A549 (cell line): ENCODE measurements at regions of chrX and their contacts with region 1.

Region 1: DNA sequence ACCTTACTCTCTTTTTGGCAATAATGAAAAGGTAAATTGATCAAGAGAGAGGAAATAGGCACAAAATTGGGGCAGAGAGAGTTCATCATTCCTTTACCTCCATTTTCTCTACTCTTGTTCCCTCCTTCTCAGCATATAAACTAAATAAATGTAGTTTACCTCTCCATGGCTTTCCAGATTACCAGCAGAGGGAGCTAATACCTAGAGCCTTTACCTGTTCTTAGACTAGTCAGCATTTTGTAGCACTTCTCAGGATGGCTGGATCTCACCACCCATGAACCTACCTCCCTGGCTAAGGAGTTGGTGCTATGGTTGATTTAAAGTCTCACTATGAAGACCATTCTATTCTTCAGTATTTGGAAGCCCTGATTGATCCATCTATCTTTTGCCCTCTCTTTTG is 15.7 kb downstream of the OFD1 start:
- DNase-seq: peak; percentile 46 to 69
- ATAC-seq: peak; percentile 70 to 84; a peak in 5 of 6 replicates
- H3K4me3 ChIP-seq: no peak overlapping the region
- H3K27ac ChIP-seq: no peak overlapping the region
- H3K4me1 ChIP-seq: no peaks in the 10 kb centered on the region
- CTCF ChIP-seq: peak; percentile 60
- EP300 ChIP-seq: no peak
- POLR2A ChIP-seq: no peak
- RAD21 ChIP-seq: peak; percentile 47 to 56

Region 2: DNA sequence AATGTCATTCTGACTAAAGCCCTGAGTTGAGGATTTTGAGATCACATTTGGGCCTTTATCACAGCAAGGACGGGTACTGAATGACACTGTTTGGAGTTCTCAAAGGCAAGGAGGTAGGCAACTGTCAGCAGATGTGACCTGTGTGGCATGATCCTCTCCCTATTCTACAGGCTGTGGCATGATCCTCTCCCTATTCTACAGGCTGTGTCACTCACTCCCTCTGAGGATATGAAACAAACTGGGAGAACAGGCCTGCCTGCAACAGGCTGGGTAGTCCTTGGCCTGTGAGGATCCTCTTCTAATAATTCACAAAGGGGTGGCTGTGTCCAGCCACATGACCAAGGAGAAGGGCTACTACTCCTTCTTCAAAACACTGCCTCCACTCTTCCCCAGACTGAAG is 112.2 kb before region 1 on chrX:
- CTCF ChIA-PET with region 1: no interaction called
- POLR2A ChIA-PET with region 1: no interaction called
- DNase-seq: no peak
- ATAC-seq: no peak
- H3K4me3 ChIP-seq: no peak overlapping the region
- H3K27ac ChIP-seq: no peak overlapping the region
- H3K4me1 ChIP-seq: peaks cover 7% of the 10 kb centered on the region; the same call in 1 of the 3 replicates
- CTCF ChIP-seq: no peak
- EP300 ChIP-seq: no peak
- POLR2A ChIP-seq: no peak
- RAD21 ChIP-seq: no peak

Region 3: GRCh38 chrX:13658602-13659001 is 91.6 kb before region 1 on chrX:
- CTCF ChIA-PET with region 1: interaction called, 10 read pairs
- POLR2A ChIA-PET with region 1: no interaction called
- DNase-seq: peak; percentile 25 to 58
- ATAC-seq: peak; percentile 78 to 80; a peak in 4 of 6 replicates
- H3K4me3 ChIP-seq: no peak overlapping the region
- H3K27ac ChIP-seq: peak overlapping the region; percentile 62 to 68; a peak in 5 of 6 replicates
- H3K4me1 ChIP-seq: peaks cover 13% of the 10 kb centered on the region; the same call in 2 of the 3 replicates
- CTCF ChIP-seq: peak; percentile 83
- EP300 ChIP-seq: no peak
- POLR2A ChIP-seq: no peak
- RAD21 ChIP-seq: peak; percentile 78 to 81

Region 4: DNA sequence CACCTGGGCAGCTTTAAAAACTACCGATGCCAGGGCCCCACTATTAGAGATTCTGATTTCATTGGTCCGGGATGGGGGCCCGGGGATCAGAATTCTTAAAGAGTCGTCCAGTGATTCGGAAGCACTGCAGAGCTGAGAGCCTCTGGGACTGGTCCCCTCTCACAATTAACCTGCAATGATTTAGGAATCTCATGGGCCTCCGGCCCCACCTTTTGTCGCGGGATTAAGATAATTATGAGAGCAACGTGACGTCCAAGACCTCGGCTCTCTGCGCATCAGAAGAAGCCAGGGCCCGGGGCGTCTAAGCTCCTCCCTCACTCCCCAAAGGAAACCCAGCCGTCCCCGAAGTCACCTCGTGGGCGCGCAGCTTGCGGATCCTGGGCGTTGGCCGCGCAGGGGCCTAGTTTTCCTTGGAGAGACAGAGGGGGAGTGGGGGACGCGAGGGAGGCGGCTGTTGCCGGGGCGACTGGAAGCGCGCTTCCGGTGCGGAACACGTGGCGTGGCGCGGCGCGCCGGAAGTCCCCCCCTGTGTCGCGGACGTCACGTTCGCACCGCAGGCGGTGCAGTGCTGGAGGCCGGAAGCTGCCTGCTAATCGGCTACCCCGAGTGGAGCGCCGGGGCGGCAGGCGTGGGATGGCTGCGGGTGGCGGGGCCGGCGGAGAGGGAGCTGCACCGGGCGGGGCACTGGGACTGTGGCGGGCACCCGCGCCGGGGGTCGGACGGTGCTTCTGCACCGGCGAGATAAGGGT is 279.4 kb after region 1 on chrX and contains the start of gene GEMIN8:
- CTCF ChIA-PET with region 1: interaction called, 28 read pairs
- POLR2A ChIA-PET with region 1: no interaction called
- DNase-seq: peak; percentile 59 to 95
- ATAC-seq: peak; percentile 95 to 96
- H3K4me3 ChIP-seq: peak within 1 kb of the TSS; percentile 87
- H3K27ac ChIP-seq: peak within 1 kb of the TSS; percentile 94 to 97
- H3K4me1 ChIP-seq: peaks cover 25% of the 10 kb centered on the region
- CTCF ChIP-seq: no peak
- EP300 ChIP-seq: no peak
- POLR2A ChIP-seq: peak; percentile 75
- RAD21 ChIP-seq: peak in 1 of 2 experiments; percentile 21; a peak in 1 of 5 replicates
- polyA plus RNA-seq, gene GEMIN8: 21.8 and 27.5 TPM in 2 replicates